B cell (primary cell): ENCODE measurements at regions of chr20 and their contacts with region 1.

Region 1: DNA sequence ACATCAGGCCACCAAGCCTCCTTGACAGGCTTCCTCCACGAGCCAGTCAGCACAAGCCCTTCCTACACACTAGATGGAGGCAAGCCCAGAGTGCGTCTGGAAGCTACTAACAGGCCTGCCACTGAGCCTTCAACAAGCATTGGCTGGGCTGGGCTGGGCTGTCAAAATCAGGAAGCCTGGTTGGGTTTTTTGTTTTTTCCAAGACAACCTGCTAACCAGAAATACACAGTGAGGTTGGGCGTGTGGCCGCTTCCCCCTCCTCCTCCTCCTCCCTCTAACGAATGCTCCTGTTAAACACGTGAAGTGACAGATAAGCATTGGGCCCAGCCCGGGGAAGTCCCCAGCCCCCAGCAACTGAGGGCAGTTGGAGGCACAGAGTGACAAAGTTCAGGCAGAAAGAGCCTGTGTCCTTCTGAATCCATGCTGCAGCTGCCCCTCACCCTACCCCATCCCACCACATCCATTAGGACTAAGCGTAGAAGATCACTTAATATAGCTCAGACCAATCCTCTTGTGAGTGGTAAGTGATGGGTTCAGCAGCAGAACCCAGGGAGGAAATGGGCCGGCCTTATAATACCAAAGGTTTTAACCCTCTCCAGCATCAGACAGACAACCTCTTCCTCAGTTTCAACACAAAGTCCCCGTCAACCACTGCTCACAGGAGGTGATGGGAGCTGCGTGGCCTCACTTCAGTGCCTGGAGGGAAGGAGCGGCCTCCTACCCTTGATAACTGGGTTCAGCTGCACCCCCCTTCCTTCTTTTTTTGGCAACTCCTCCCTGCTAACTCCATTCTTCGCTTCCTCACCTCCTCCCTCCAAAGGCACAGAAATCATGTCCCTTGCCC is 1.1 kb downstream of the NFATC2 start:
- DNase-seq: peak; percentile 86
- ATAC-seq: peak; percentile 50
- H3K4me3 ChIP-seq: peak overlapping the region; percentile 61 to 89 (median 74)
- H3K4me3 Mint-ChIP-seq: peak overlapping the region; percentile 97
- H3K27ac ChIP-seq: peak overlapping the region; percentile 88 to 96
- H3K27ac Mint-ChIP-seq: peak overlapping the region; percentile 96
- H3K4me1 ChIP-seq: peaks cover 30 to 50% of the 10 kb centered on the region in 2 donors
- H3K4me1 Mint-ChIP-seq: peaks cover 54% of the 10 kb centered on the region
- H3K27me3 ChIP-seq: peaks cover 0 to 4% (median 0%) of the 10 kb centered on the region in 4 experiments
- H3K27me3 Mint-ChIP-seq: no peaks in the 10 kb centered on the region
- CTCF ChIP-seq: no peak

Region 2: GRCh38 chr20:51195419-51195901 is 346.0 kb before region 1 on chr20:
- CTCF ChIA-PET with region 1: no interaction called
- POLR2A ChIA-PET with region 1: no interaction called
- intact Hi-C with region 1: no loop called
- DNase-seq: no peak
- ATAC-seq: no peak
- H3K4me3 ChIP-seq: no peak overlapping the region
- H3K4me3 Mint-ChIP-seq: no peak overlapping the region
- H3K27ac ChIP-seq: no peak overlapping the region
- H3K27ac Mint-ChIP-seq: no peak overlapping the region
- H3K4me1 ChIP-seq: peaks cover 0 to 1% of the 10 kb centered on the region in 2 donors
- H3K4me1 Mint-ChIP-seq: no peaks in the 10 kb centered on the region
- H3K27me3 ChIP-seq: peaks cover 0 to 17% (median 1%) of the 10 kb centered on the region in 4 experiments
- H3K27me3 Mint-ChIP-seq: peaks cover 16% of the 10 kb centered on the region
- CTCF ChIP-seq: no peak

Region 3: DNA sequence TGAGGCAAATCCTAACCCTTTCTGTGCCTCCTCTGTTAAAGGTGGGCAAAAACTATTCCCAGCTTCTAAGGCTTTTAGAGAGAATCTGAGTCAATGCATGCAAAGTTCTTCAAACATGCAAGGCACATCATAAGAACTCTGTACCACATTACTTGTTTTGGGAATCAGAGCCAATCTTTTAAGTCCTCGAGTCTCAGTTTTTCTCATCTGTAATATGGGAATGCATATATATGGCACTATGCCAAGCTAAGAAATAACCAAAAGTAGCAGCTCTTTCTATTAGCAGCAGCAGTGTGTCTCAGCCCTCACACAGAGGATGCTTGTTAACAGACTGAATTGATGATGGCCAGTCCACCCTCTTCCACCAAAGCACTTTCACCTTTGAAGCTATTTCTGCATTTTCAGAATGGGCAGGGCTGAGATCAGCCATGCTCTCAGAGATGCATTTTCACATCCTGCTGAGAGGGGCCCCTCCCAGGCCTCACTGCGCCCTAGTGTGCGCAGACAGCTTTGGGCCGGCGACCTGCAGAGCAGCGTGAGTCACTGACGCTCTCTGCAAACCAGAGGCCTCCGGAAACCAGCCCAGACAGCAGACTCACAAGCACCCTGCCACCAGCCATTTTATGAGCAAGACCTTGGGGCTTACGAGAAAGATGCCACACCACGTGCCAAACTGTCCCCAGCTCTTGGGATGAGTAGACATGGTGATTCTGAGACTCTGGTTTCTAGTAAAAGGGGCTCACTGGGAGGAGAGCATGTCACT is 136.9 kb before region 1 on chr20:
- CTCF ChIA-PET with region 1: interaction called, 7 read pairs
- POLR2A ChIA-PET with region 1: interaction called, 3 read pairs
- intact Hi-C with region 1: loop called (anchors 2 kb)
- DNase-seq: peak; percentile 92
- ATAC-seq: peak; percentile 85
- H3K4me3 ChIP-seq: no peak overlapping the region
- H3K4me3 Mint-ChIP-seq: peak overlapping the region; percentile 49
- H3K27ac ChIP-seq: peak overlapping the region; percentile 86 to 97
- H3K27ac Mint-ChIP-seq: peak overlapping the region; percentile 99
- H3K4me1 ChIP-seq: peaks cover 62 to 74% of the 10 kb centered on the region in 2 donors
- H3K4me1 Mint-ChIP-seq: peaks cover 77% of the 10 kb centered on the region
- H3K27me3 ChIP-seq: no peaks in the 10 kb centered on the region
- H3K27me3 Mint-ChIP-seq: no peaks in the 10 kb centered on the region
- CTCF ChIP-seq: no peak

Region 4: GRCh38 chr20:51423290-51423667 is 118.1 kb before region 1 on chr20:
- CTCF ChIA-PET with region 1: interaction called, 4 read pairs
- POLR2A ChIA-PET with region 1: no interaction called
- intact Hi-C with region 1: loop called (anchors 5 kb)
- DNase-seq: peak; percentile 25
- ATAC-seq: peak; percentile 29
- H3K4me3 ChIP-seq: no peak overlapping the region
- H3K4me3 Mint-ChIP-seq: no peak overlapping the region
- H3K27ac ChIP-seq: peak overlapping the region; percentile 73
- H3K27ac Mint-ChIP-seq: peak overlapping the region; percentile 82
- H3K4me1 ChIP-seq: peaks cover 25 to 41% of the 10 kb centered on the region in 2 donors
- H3K4me1 Mint-ChIP-seq: peaks cover 50% of the 10 kb centered on the region
- H3K27me3 ChIP-seq: no peaks in the 10 kb centered on the region
- H3K27me3 Mint-ChIP-seq: no peaks in the 10 kb centered on the region
- CTCF ChIP-seq: no peak

Region 5: DNA sequence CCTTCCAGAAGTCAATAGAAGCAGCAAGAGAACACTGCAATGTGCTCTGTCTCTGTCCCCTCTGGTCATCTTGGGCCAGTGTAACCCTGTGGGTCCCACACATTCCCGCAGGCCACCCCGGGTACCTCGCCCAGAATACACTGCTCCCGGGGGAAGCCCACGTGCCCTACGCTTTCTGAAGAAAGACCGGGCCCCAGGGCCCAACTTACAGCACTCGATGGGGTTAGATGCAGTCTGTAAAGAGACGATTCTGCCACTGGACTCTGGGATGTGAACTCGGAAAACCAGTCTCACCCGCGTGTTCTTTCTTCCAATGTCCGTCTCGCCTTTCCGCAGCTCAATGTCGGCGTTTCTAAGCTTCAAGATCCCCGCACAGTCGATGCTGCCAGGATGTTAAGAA is 67.6 kb before region 1 on chr20:
- CTCF ChIA-PET with region 1: no interaction called
- POLR2A ChIA-PET with region 1: no interaction called
- intact Hi-C with region 1: no loop called
- DNase-seq: no peak
- ATAC-seq: no peak
- H3K4me3 ChIP-seq: no peak overlapping the region
- H3K4me3 Mint-ChIP-seq: no peak overlapping the region
- H3K27ac ChIP-seq: no peak overlapping the region
- H3K27ac Mint-ChIP-seq: no peak overlapping the region
- H3K4me1 ChIP-seq: no peaks in the 10 kb centered on the region
- H3K4me1 Mint-ChIP-seq: peaks cover 6% of the 10 kb centered on the region
- H3K27me3 ChIP-seq: no peaks in the 10 kb centered on the region
- H3K27me3 Mint-ChIP-seq: no peaks in the 10 kb centered on the region
- CTCF ChIP-seq: no peak

Region 6: GRCh38 chr20:51500311-51500710 is 41.1 kb before region 1 on chr20:
- CTCF ChIA-PET with region 1: interaction called, 9 read pairs
- POLR2A ChIA-PET with region 1: interaction called, 5 read pairs
- intact Hi-C with region 1: loop called (anchors 1 kb)
- DNase-seq: peak; percentile 63
- ATAC-seq: peak; percentile 76
- H3K4me3 ChIP-seq: no peak overlapping the region
- H3K4me3 Mint-ChIP-seq: no peak overlapping the region
- H3K27ac ChIP-seq: peak overlapping the region; percentile 11 to 25
- H3K27ac Mint-ChIP-seq: peak overlapping the region; percentile 29
- H3K4me1 ChIP-seq: peaks cover 71 to 89% of the 10 kb centered on the region in 2 donors
- H3K4me1 Mint-ChIP-seq: peaks cover 89% of the 10 kb centered on the region
- H3K27me3 ChIP-seq: no peaks in the 10 kb centered on the region
- H3K27me3 Mint-ChIP-seq: no peaks in the 10 kb centered on the region
- CTCF ChIP-seq: no peak

Region 7: GRCh38 chr20:51525241-51526129 is 15.9 kb before region 1 on chr20:
- CTCF ChIA-PET with region 1: interaction called, 7 read pairs
- POLR2A ChIA-PET with region 1: interaction called, 12 read pairs
- intact Hi-C with region 1: loop called (anchors 1 kb)
- DNase-seq: peak; percentile 69
- ATAC-seq: peak; percentile 66
- H3K4me3 ChIP-seq: peak overlapping the region in 2 of 5 experiments; percentile 2 to 48
- H3K4me3 Mint-ChIP-seq: peak overlapping the region; percentile 80
- H3K27ac ChIP-seq: peak overlapping the region; percentile 70 to 78
- H3K27ac Mint-ChIP-seq: peak overlapping the region; percentile 89
- H3K4me1 ChIP-seq: peaks cover 47 to 60% of the 10 kb centered on the region in 2 donors
- H3K4me1 Mint-ChIP-seq: peaks cover 70% of the 10 kb centered on the region
- H3K27me3 ChIP-seq: no peaks in the 10 kb centered on the region
- H3K27me3 Mint-ChIP-seq: no peaks in the 10 kb centered on the region
- CTCF ChIP-seq: no peak

Region 8: GRCh38 chr20:51650685-51651134 is 109.3 kb after region 1 on chr20:
- CTCF ChIA-PET with region 1: no interaction called
- POLR2A ChIA-PET with region 1: no interaction called
- intact Hi-C with region 1: no loop called
- DNase-seq: peak; percentile 68
- ATAC-seq: peak; percentile 74
- H3K4me3 ChIP-seq: no peak overlapping the region
- H3K4me3 Mint-ChIP-seq: peak overlapping the region; percentile 71
- H3K27ac ChIP-seq: no peak overlapping the region
- H3K27ac Mint-ChIP-seq: peak overlapping the region; percentile 76
- H3K4me1 ChIP-seq: peaks cover 4 to 10% of the 10 kb centered on the region in 2 donors
- H3K4me1 Mint-ChIP-seq: peaks cover 22% of the 10 kb centered on the region
- H3K27me3 ChIP-seq: no peaks in the 10 kb centered on the region
- H3K27me3 Mint-ChIP-seq: no peaks in the 10 kb centered on the region
- CTCF ChIP-seq: no peak